A549 (cell line): ENCODE measurements at regions of chr1 and their contacts with region 1.

Region 1: DNA sequence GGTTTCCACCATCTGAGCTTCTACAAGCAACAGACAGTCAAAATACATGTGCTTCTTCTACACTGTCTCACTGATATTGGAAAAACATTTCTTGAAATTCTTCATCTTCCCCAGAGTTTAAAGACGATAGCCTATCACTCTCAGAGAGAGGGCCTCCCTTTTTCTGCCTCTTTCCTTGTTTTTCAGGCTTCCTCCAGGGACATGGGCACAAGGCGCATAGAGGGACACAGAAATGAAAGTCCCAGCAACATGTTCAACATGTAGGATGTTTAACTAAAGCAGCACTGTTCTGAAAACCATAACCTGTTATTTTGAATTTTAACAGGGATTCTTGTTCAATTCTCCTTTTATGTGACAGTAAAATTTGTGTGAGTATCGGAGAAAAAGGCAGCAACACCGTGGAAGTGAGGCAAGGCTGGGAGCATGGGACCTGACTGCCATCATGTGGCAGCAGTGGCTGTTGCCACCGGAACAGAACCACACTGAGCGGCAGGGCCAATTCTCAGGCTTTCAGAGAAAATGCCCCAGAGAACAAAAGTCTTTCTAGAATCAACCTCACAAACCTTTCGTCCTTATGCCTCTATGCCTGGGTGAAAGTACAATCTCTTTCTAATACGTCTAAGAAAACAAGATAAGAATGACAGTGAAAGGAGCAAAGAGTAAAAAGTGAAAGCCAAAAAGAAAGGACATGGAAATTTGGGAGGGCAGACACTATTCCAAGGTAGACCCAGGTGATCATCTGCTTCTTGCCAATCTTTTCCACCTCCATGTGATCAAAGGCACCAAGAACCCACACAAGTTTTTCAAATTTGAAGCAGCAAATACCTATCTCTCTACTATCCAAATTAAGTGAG is 54.5 kb downstream of the PCNX2 start:
- DNase-seq: peak; percentile 47 to 64
- ATAC-seq: peak; percentile 91 to 95
- H3K4me3 ChIP-seq: no peak overlapping the region
- H3K27ac ChIP-seq: peak overlapping the region; percentile 43 to 69
- H3K4me1 ChIP-seq: peaks cover 41% of the 10 kb centered on the region
- CTCF ChIP-seq: peak; percentile 89
- EP300 ChIP-seq: no peak
- POLR2A ChIP-seq: no peak
- RAD21 ChIP-seq: peak; percentile 96 to 97

Region 2: GRCh38 chr1:232635778-232636356 is 605.2 kb before region 1 on chr1:
- CTCF ChIA-PET with region 1: interaction called, 15 read pairs
- POLR2A ChIA-PET with region 1: no interaction called
- DNase-seq: peak; percentile 58 to 63
- ATAC-seq: peak; percentile 74 to 91; a peak in 3 of 6 replicates
- H3K4me3 ChIP-seq: no peak overlapping the region
- H3K27ac ChIP-seq: peak overlapping the region; percentile 8 to 48; a peak in 5 of 6 replicates
- H3K4me1 ChIP-seq: peaks cover 6% of the 10 kb centered on the region; the same call in 2 of the 3 replicates
- CTCF ChIP-seq: peak; percentile 84
- EP300 ChIP-seq: no peak
- POLR2A ChIP-seq: no peak
- RAD21 ChIP-seq: peak; percentile 81 to 85

Region 3: GRCh38 chr1:233217832-233218231 is 23.2 kb before region 1 on chr1:
- CTCF ChIA-PET with region 1: no interaction called
- POLR2A ChIA-PET with region 1: no interaction called
- DNase-seq: no peak
- ATAC-seq: no peak
- H3K4me3 ChIP-seq: no peak overlapping the region
- H3K27ac ChIP-seq: no peak overlapping the region
- H3K4me1 ChIP-seq: no peaks in the 10 kb centered on the region
- CTCF ChIP-seq: no peak
- EP300 ChIP-seq: no peak
- POLR2A ChIP-seq: no peak
- RAD21 ChIP-seq: no peak

Region 4: GRCh38 chr1:233496993-233497392 is 255.9 kb after region 1 on chr1:
- CTCF ChIA-PET with region 1: no interaction called
- POLR2A ChIA-PET with region 1: no interaction called
- DNase-seq: no peak
- ATAC-seq: no peak
- H3K4me3 ChIP-seq: no peak overlapping the region
- H3K27ac ChIP-seq: no peak overlapping the region
- H3K4me1 ChIP-seq: no peaks in the 10 kb centered on the region
- CTCF ChIP-seq: no peak
- EP300 ChIP-seq: no peak
- POLR2A ChIP-seq: no peak
- RAD21 ChIP-seq: no peak